ENCODE measurements at regions of chr11 and their contacts with region 1.

Region 1: DNA sequence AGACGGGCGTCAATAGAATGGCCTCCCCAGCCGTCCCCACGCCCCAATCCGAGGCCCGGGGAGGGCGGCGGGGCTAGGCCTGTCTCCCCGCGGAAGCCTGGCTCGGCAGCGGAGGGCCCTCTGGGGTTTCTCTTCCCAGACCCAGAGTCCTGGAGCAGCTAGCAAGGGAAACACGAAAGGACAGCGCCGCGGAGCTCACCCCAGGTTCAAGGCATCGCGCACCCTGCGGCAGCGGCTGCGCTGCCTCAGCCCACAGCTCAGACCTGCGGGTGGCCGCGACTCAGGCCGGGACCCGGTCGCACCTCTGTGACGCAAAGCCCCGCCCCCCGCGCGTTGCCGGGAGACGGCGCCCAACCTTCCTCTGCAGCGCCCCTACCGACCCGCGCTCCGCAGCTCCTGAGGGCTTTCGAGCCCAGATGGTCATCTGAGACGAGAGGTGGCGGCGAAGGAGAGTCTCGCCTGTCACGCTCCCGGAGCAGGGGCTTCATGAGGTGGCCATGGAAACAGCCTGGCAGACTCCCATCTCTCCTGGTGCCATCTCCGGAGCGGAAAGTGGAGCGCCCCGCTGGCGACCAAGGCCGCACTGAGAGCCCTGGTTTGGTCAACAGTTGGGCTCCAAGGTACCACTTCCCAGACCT is at the start of gene RNF141:
- DNase-seq: peak; percentile 96
- ATAC-seq: peak; percentile 86
- H3K4me3 ChIP-seq: peak within 1 kb of the TSS; percentile 73 to 93 (median 78)
- H3K4me3 Mint-ChIP-seq: peak within 1 kb of the TSS; percentile 95
- H3K27ac ChIP-seq: peak within 1 kb of the TSS; percentile 83 to 92
- H3K27ac Mint-ChIP-seq: peak within 1 kb of the TSS; percentile 98
- H3K4me1 ChIP-seq: peaks cover 59 to 62% of the 10 kb centered on the region in 2 donors
- H3K4me1 Mint-ChIP-seq: peaks cover 79% of the 10 kb centered on the region
- H3K27me3 ChIP-seq: no peaks in the 10 kb centered on the region
- H3K27me3 Mint-ChIP-seq: no peaks in the 10 kb centered on the region
- CTCF ChIP-seq: peak; percentile 91
- total RNA-seq, gene RNF141: 48.2 and 49.1 TPM in 2 replicates

Region 2: GRCh38 chr11:9460322-9461067 is 1080.5 kb before region 1 on chr11 and contains the start of gene ZNF143:
- CTCF ChIA-PET with region 1: no interaction called
- POLR2A ChIA-PET with region 1: no interaction called
- intact Hi-C with region 1: loop called (anchors 2 kb)
- DNase-seq: peak; percentile 100
- ATAC-seq: peak; percentile 82
- H3K4me3 ChIP-seq: peak within 1 kb of the TSS; percentile 87 to 98 (median 93)
- H3K4me3 Mint-ChIP-seq: peak within 1 kb of the TSS; percentile 97
- H3K27ac ChIP-seq: peak within 1 kb of the TSS; percentile 95 to 99
- H3K27ac Mint-ChIP-seq: peak within 1 kb of the TSS; percentile 98
- H3K4me1 ChIP-seq: peaks cover 19 to 26% of the 10 kb centered on the region in 2 donors
- H3K4me1 Mint-ChIP-seq: peaks cover 26% of the 10 kb centered on the region
- H3K27me3 ChIP-seq: no peaks in the 10 kb centered on the region
- H3K27me3 Mint-ChIP-seq: no peaks in the 10 kb centered on the region
- CTCF ChIP-seq: no peak
- total RNA-seq, gene ZNF143: 54.9 and 56.5 TPM in 2 replicates

Region 3: DNA sequence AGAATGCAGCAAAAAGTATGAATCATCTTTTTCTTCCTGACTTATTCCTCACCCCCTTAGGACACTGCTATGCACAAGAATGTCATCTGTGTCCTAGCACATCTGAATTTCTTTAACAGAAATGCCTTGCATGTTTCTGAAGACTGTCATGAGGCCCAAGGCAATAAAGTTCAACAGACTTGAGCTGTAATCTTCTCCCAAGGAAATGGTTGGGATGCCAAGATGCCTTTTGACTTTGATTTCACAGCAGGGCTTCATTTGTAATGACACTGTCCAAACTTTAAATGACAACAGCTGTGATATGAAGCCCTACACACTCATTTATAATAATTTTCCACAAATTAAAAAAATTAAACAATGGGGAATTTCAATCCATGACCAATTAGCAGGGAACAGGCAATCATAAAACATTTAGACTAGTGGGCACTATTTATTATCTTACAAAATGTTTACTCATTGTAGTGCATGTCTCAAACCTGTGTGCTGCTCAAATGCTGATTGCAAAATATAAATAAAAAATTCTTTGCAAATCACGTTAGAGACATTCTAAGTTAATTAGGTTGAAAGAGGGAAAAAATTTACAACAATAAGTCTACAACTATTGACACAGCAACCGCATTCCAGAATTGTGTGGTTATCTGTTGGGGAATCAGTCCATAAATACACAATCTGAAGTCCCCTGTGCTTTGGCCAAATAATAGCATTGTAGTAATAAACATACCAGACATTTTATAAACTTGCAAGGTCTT is 634.8 kb before region 1 on chr11:
- CTCF ChIA-PET with region 1: no interaction called
- POLR2A ChIA-PET with region 1: no interaction called
- intact Hi-C with region 1: no loop called
- DNase-seq: no peak
- ATAC-seq: no peak
- H3K4me3 ChIP-seq: no peak overlapping the region
- H3K4me3 Mint-ChIP-seq: no peak overlapping the region
- H3K27ac ChIP-seq: no peak overlapping the region
- H3K27ac Mint-ChIP-seq: no peak overlapping the region
- H3K4me1 ChIP-seq: no peaks in the 10 kb centered on the region
- H3K4me1 Mint-ChIP-seq: no peaks in the 10 kb centered on the region
- H3K27me3 ChIP-seq: no peaks in the 10 kb centered on the region
- H3K27me3 Mint-ChIP-seq: peaks cover 2% of the 10 kb centered on the region
- CTCF ChIP-seq: no peak

Region 4: GRCh38 chr11:10441652-10442503 is 99.2 kb before region 1 on chr11:
- CTCF ChIA-PET with region 1: interaction called, 11 read pairs
- POLR2A ChIA-PET with region 1: interaction called, 4 read pairs
- intact Hi-C with region 1: no loop called
- DNase-seq: peak; percentile 85
- ATAC-seq: peak; percentile 89
- H3K4me3 ChIP-seq: peak overlapping the region in 2 of 5 experiments; percentile 1 to 20
- H3K4me3 Mint-ChIP-seq: peak overlapping the region; percentile 61
- H3K27ac ChIP-seq: peak overlapping the region; percentile 89 to 96
- H3K27ac Mint-ChIP-seq: peak overlapping the region; percentile 97
- H3K4me1 ChIP-seq: peaks cover 38 to 41% of the 10 kb centered on the region in 2 donors
- H3K4me1 Mint-ChIP-seq: peaks cover 39% of the 10 kb centered on the region
- H3K27me3 ChIP-seq: no peaks in the 10 kb centered on the region
- H3K27me3 Mint-ChIP-seq: no peaks in the 10 kb centered on the region
- CTCF ChIP-seq: no peak

Region 5: DNA sequence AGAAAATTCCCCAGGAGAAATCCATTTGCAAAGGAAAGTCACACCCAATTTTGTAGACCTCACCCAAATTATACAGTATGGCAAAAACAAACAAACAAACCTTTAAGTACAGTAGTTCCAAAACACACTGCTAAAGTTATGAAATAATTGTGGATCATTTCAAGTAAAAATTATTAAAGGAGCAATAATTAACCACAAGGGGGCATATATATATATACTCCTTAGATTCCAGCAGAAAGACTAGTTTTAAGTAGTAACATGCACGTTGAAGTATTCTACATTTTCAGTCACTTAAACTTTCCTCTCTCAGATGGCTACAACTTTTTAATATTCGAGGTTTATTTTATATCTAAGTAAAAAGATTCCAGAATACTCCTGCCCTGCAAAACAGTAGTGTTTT is 26.8 kb before region 1 on chr11:
- CTCF ChIA-PET with region 1: interaction called, 17 read pairs
- POLR2A ChIA-PET with region 1: interaction called, 3 read pairs
- intact Hi-C with region 1: no loop called
- DNase-seq: peak; percentile 42
- ATAC-seq: no peak
- H3K4me3 ChIP-seq: no peak overlapping the region
- H3K4me3 Mint-ChIP-seq: no peak overlapping the region
- H3K27ac ChIP-seq: peak overlapping the region in 1 of 2 donors; percentile 7
- H3K27ac Mint-ChIP-seq: peak overlapping the region; percentile 43
- H3K4me1 ChIP-seq: no peaks in the 10 kb centered on the region
- H3K4me1 Mint-ChIP-seq: peaks cover 16% of the 10 kb centered on the region
- H3K27me3 ChIP-seq: no peaks in the 10 kb centered on the region
- H3K27me3 Mint-ChIP-seq: no peaks in the 10 kb centered on the region
- CTCF ChIP-seq: peak; percentile 62

Region 6: GRCh38 chr11:10612216-10612862 is 71.3 kb after region 1 on chr11:
- CTCF ChIA-PET with region 1: interaction called, 45 read pairs
- POLR2A ChIA-PET with region 1: interaction called, 12 read pairs
- intact Hi-C with region 1: no loop called
- DNase-seq: peak; percentile 75
- ATAC-seq: peak; percentile 65
- H3K4me3 ChIP-seq: peak overlapping the region in 1 of 5 experiments; percentile 45
- H3K4me3 Mint-ChIP-seq: peak overlapping the region; percentile 48
- H3K27ac ChIP-seq: peak overlapping the region; percentile 84 to 91
- H3K27ac Mint-ChIP-seq: peak overlapping the region; percentile 97
- H3K4me1 ChIP-seq: peaks cover 80% of the 10 kb centered on the region in 2 donors
- H3K4me1 Mint-ChIP-seq: peaks cover 81% of the 10 kb centered on the region
- H3K27me3 ChIP-seq: no peaks in the 10 kb centered on the region
- H3K27me3 Mint-ChIP-seq: no peaks in the 10 kb centered on the region
- CTCF ChIP-seq: no peak

Region 7: GRCh38 chr11:10641177-10641911 is 100.3 kb after region 1 on chr11:
- CTCF ChIA-PET with region 1: interaction called, 13 read pairs
- POLR2A ChIA-PET with region 1: interaction called, 9 read pairs
- intact Hi-C with region 1: loop called (anchors 1 kb)
- DNase-seq: peak; percentile 77
- ATAC-seq: peak; percentile 87
- H3K4me3 ChIP-seq: peak overlapping the region in 1 of 5 experiments; percentile 35
- H3K4me3 Mint-ChIP-seq: peak overlapping the region; percentile 74
- H3K27ac ChIP-seq: peak overlapping the region; percentile 87 to 88
- H3K27ac Mint-ChIP-seq: peak overlapping the region; percentile 94
- H3K4me1 ChIP-seq: peaks cover 55 to 79% of the 10 kb centered on the region in 2 donors
- H3K4me1 Mint-ChIP-seq: peaks cover 81% of the 10 kb centered on the region
- H3K27me3 ChIP-seq: no peaks in the 10 kb centered on the region
- H3K27me3 Mint-ChIP-seq: no peaks in the 10 kb centered on the region
- CTCF ChIP-seq: no peak

Region 8: DNA sequence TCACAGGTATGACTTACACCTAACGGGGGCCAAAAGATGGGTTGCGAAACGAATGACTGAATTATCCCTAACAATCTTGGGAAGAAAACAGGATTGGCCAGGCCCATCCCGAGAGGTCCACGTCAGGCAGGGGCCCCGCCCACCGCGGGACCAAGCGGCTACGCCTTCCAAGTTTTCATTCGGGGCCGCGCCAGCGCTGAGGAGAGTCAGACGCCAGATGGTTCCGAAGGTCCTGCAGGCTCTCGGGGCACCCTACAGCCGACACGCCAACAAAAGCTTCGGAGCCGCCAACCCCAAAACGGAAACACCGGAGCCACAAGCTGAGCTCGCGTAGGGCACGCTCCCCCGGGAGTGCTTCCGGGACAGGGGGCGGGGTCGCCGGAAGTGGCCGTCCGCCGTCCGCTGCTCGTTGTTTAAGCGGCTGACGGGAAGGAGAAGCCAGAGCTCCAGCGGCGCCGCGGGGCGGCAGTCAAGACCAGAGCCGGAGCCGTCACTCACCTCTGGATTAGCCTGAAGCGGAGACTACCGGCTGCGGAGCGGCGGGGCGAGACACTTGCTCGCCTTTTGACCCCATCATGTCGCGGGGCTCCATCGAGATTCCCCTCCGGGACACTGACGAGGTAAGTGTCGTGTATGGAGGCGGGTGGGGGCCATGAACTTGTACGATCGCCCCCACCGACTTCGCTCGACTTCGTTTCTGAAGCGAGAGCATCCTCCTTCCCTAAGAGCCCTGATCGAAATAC is 210.0 kb after region 1 on chr11 and contains the start of gene CTR9:
- CTCF ChIA-PET with region 1: interaction called, 3 read pairs
- POLR2A ChIA-PET with region 1: interaction called, 5 read pairs
- intact Hi-C with region 1: loop called (anchors 1 kb)
- DNase-seq: peak; percentile 95
- ATAC-seq: peak; percentile 92
- H3K4me3 ChIP-seq: peak within 1 kb of the TSS; percentile 77 to 96 (median 92)
- H3K4me3 Mint-ChIP-seq: peak within 1 kb of the TSS; percentile 95
- H3K27ac ChIP-seq: peak within 1 kb of the TSS; percentile 78 to 85
- H3K27ac Mint-ChIP-seq: peak within 1 kb of the TSS; percentile 91
- H3K4me1 ChIP-seq: peaks cover 8 to 12% of the 10 kb centered on the region in 2 donors
- H3K4me1 Mint-ChIP-seq: peaks cover 21% of the 10 kb centered on the region
- H3K27me3 ChIP-seq: no peaks in the 10 kb centered on the region
- H3K27me3 Mint-ChIP-seq: no peaks in the 10 kb centered on the region
- CTCF ChIP-seq: no peak
- total RNA-seq, gene CTR9: 46.7 and 52.0 TPM in 2 replicates

Measured in B cell (primary cell).